HepG2 (cell line): ENCODE measurements at regions of chr14 and their contacts with region 1.

Region 1: DNA sequence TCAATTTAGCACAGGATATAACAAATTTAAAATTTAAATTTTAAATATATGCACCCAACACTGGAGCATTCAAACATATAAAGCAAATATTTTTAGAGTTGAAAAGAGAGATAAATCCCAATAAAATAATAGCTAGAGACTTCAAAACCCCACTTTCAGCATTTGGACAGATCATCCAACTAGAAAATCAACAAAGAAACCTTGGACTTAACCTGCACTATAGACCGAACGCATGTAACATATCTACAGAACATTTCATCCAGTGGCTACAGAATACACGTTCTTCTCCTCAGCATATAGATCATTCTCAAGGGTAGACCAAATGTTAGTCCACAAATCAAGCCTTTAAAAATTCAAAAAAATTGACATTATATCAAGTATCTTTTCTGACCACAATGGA is 64.0 kb downstream of the SPTSSA start:
- DNase-seq: no peak
- ATAC-seq: no peak
- H3K4me3 ChIP-seq: no peak overlapping the region
- H3K27ac ChIP-seq: no peak overlapping the region
- H3K4me1 ChIP-seq: no peaks in the 10 kb centered on the region
- H3K27me3 ChIP-seq: no peaks in the 10 kb centered on the region
- CTCF ChIP-seq: no peak
- EP300 ChIP-seq: no peak
- POLR2A ChIP-seq: no peak
- RAD21 ChIP-seq: no peak

Region 2: GRCh38 chr14:34425095-34425851 is 27.2 kb after region 1 on chr14:
- CTCF ChIA-PET with region 1: no interaction called
- POLR2A ChIA-PET with region 1: no interaction called
- in situ Hi-C with region 1: no loop called
- intact Hi-C with region 1: no loop called
- DNase-seq: peak; percentile 32
- ATAC-seq: no peak
- H3K4me3 ChIP-seq: no peak overlapping the region
- H3K27ac ChIP-seq: no peak overlapping the region
- H3K4me1 ChIP-seq: peaks cover 19% of the 10 kb centered on the region
- H3K27me3 ChIP-seq: 0 out of 5 replicates have a peak, but pooled peaks cover 0 to 6% of the 10 kb centered on the region in 2 experiments
- CTCF ChIP-seq: no peak
- EP300 ChIP-seq: no peak
- POLR2A ChIP-seq: no peak
- RAD21 ChIP-seq: no peak

Region 3: GRCh38 chr14:34629657-34630529 is 231.9 kb after region 1 on chr14 and contains the start of gene SNX6:
- CTCF ChIA-PET with region 1: no interaction called
- POLR2A ChIA-PET with region 1: no interaction called
- in situ Hi-C with region 1: no loop called
- intact Hi-C with region 1: no loop called
- DNase-seq: peak; percentile 78
- ATAC-seq: peak; percentile 97
- H3K4me3 ChIP-seq: peak within 1 kb of the TSS; percentile 95 to 100 (median 99)
- H3K27ac ChIP-seq: peak within 1 kb of the TSS; percentile 81
- H3K4me1 ChIP-seq: peaks cover 39% of the 10 kb centered on the region
- H3K27me3 ChIP-seq: peaks cover 0 to 3% of the 10 kb centered on the region in 2 experiments; a peak in 1 of 5 replicates
- CTCF ChIP-seq: peak; percentile 38; the same call in 1 of the 2 replicates
- EP300 ChIP-seq: no peak; a peak in 1 of 4 replicates
- POLR2A ChIP-seq: peak; percentile 85 to 97
- RAD21 ChIP-seq: peak; percentile 24
- total RNA-seq, gene SNX6: 169 and 318 TPM in 2 replicates

Region 4: GRCh38 chr14:36194663-36195062 is 1796.6 kb after region 1 on chr14:
- CTCF ChIA-PET with region 1: no interaction called
- POLR2A ChIA-PET with region 1: no interaction called
- in situ Hi-C with region 1: no loop called
- intact Hi-C with region 1: loop called (anchors 10 kb)
- DNase-seq: no peak
- ATAC-seq: no peak
- H3K4me3 ChIP-seq: no peak overlapping the region
- H3K27ac ChIP-seq: no peak overlapping the region
- H3K4me1 ChIP-seq: no peaks in the 10 kb centered on the region
- H3K27me3 ChIP-seq: peaks cover 6 to 21% of the 10 kb centered on the region in 2 experiments; a peak in 4 of 5 replicates
- CTCF ChIP-seq: no peak
- EP300 ChIP-seq: no peak
- POLR2A ChIP-seq: no peak
- RAD21 ChIP-seq: no peak